Lower leg skin (tissue), 4 donors: ENCODE measurements at regions of chr19 and their contacts with region 1.

Region 1: DNA sequence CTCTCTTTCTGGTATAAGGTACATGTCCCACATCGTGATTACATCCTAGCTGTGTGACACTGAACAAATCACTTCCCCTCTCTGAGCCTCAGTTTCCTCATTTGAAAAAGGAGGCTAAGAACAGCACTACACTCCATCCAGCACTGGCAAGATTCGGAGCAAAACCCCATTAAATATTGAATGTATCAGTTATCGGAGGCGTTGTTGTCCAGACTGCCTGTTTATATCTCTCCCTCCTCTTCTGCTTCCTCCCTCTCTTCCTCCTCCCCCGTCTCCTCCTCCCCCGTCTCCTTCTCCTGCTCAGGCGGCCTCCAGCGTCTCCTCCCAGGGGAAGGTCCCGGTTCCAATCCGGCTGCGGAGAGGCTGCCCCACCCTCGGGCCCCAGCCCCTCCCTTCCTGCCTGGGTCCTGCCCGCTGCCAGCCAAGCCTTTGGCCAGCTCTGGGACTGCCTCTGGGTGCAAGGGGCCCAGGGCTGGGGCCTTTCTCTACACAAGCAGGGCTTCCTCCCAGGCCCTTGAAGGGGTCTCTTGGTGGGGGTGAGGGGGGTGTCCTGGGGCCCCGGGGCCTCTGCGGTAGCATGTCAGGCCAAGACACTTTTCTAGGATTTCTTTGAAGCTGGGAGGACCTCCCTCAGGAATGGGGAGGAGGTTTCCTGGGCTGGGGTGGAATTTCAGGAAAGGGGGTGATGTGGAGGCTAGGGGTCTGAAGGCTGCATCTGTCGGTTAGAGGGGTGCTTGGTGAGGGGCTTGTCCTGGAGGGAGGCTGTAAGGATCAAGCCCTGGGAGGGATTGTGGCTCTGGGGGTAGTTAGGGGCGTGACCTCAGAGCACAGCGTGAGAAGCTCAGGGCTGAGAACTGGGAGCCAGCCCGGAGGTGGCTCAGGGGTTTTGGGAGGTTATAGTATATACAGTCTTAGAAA is 1.9 kb downstream of the RRAS start:
- DNase-seq: peak; percentile 82 to 97
- H3K4me3 ChIP-seq: no peak overlapping the region
- CTCF ChIP-seq: no peak
- POLR2A ChIP-seq: no peak

Region 2: GRCh38 chr19:49590071-49590970 is 47.8 kb before region 1 on chr19:
- intact Hi-C with region 1: loop called (anchors 5 kb)
- DNase-seq: peak; percentile 96 to 99
- H3K4me3 ChIP-seq: peak overlapping the region; percentile 42
- CTCF ChIP-seq: no peak
- POLR2A ChIP-seq: no peak